ENCODE measurements at regions of chr21 and their contacts with region 1.

Region 1: DNA sequence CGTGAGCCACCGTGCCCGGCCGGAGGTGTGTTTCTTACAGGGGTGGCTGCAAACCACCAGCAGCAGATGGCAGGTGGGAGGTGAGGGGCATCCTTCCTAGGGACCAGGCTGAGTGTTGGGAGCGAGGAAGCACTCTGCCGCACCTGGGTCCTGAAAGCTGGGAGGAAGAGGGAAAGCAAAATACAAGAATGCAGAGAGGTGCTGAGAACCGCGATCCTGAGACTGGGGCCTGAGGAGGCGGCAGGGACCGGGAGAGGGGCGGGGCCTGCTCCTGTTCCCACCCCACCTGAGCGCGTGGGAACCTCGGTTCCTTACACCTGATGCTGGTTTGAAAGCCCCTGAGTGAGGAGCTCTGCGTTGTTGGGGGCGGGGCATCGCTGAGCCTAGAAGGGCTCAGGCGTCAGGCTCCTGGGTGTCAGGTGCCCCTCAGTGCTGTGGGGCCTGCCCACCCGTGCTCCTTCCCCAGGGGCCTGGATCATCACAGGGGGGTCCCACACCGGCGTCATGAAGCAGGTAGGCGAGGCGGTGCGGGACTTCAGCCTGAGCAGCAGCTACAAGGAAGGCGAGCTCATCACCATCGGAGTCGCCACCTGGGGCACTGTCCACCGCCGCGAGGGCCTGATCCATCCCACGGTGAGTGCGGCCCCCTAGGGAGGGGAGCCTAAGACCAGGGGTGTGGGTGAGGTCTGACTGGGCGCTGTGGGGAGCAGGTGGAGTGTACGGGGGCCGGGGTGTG is 15.5 kb downstream of the TRPM2 start:
- DNase-seq: peak; percentile 41 to 70
- ATAC-seq: no peak
- H3K4me3 ChIP-seq: no peak overlapping the region
- H3K27ac ChIP-seq: no peak overlapping the region
- H3K4me1 ChIP-seq: no peaks in the 10 kb centered on the region
- H3K27me3 ChIP-seq: no peaks in the 10 kb centered on the region

Region 2: GRCh38 chr21:44397431-44398031 is 28.7 kb after region 1 on chr21:
- intact Hi-C with region 1: no loop called
- DNase-seq: peak in 1 of 2 donors; percentile 36
- ATAC-seq: no peak
- H3K4me3 ChIP-seq: no peak overlapping the region
- H3K27ac ChIP-seq: no peak overlapping the region
- H3K4me1 ChIP-seq: no peaks in the 10 kb centered on the region
- H3K27me3 ChIP-seq: no peaks in the 10 kb centered on the region

Region 3: DNA sequence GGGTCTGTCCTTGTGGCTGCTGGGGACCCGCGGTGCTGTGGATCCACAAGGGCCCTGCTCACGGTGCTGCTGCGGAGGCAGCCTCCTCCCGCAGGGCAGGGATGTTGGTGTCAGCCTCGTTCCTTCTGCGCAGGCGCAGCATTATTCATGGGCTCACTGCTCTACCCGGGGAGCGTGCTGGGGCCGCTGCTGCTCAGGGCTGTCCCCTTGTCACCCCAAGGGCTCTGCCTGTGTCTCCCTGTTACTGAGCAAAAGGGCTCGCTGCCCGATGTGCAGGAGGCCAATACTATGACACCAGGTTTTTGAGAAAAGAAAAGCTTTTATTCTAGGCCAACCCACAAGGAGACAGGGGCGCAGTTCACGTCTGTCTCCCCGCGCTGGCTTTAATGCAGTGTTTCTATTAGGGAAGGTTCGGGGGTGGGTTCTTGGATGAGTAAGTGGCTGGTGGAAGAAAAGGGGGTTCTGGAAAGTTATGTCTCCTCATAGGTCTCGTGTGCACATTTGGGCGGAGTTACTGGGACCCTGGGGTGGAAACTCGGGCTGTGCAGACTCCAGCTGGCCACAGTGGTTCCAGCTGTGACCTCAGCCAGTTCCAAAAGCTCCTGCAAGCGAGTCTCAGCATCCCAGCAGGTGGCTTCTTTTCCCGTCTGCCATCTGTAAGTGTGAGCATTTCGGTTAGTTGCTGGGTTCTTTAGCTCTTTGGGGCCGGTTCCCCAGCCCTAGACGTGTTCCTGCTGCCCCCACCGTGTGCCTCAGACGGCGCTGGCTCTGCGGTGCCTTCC is 45.6 kb after region 1 on chr21:
- intact Hi-C with region 1: loop called in 1 of 2 experiments (anchors 10 kb)
- DNase-seq: peak; percentile 14 to 64
- ATAC-seq: no peak
- H3K4me3 ChIP-seq: no peak overlapping the region
- H3K27ac ChIP-seq: no peak overlapping the region
- H3K4me1 ChIP-seq: no peaks in the 10 kb centered on the region
- H3K27me3 ChIP-seq: no peaks in the 10 kb centered on the region

Region 4: DNA sequence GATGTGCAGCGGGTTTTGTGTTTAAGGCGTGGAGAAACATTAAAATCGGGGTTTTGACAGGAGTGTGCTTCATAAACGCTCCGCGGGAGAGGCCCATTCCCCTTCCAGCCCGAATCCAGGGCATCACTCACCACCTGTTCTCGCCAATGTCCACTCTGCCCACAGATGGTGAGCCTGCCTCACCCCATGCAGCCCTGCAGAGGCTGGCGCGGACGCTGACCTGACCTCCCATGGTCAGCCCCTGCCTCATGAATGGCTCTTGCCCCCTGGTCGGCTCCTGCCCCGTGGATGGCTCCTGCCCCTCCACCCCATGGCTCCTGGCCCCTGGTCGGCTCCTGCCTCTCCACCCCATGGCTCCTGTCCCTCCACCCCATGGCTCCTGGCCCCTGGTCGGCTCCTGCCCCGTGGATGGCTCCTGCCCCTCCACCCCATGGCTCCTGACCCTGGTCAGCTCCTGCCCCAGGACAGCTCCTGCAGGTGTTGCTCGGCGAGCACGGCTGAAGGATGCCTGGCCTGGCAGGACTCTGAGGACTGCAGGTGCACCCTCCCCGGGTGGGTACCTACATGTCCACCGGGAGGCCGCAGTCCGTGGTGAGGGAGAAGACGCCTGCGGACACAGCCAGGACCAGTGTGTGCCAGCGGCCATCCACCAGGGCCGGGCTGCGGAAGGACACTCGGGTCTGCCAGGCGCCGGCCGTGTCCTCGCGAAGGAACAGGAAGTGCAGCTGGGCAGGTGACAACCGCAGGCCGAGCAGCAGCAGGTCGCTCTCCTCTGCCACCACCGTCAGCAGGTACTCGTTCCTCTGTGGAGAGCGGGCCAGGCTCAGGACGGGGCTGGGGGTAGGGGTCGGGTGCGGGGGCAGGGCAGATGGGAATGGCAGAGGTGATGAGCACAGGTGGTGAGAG is 164.5 kb after region 1 on chr21:
- intact Hi-C with region 1: no loop called
- DNase-seq: peak; percentile 40 to 75
- ATAC-seq: no peak
- H3K4me3 ChIP-seq: no peak overlapping the region
- H3K27ac ChIP-seq: no peak overlapping the region
- H3K4me1 ChIP-seq: no peaks in the 10 kb centered on the region
- H3K27me3 ChIP-seq: no peaks in the 10 kb centered on the region

Measured in aorta (tissue), 5 donors.